Mucosa of descending colon (tissue), 3 donors: ENCODE measurements at regions of chr15 and their contacts with region 1.

Region 1: GRCh38 chr15:89874926-89875564 is 18.7 kb downstream of the AP3S2 start:
- DNase-seq: peak; percentile 86 to 95 (median 91)
- ATAC-seq: peak; percentile 96
- H3K4me3 ChIP-seq: no peak overlapping the region
- H3K4me1 ChIP-seq: no peaks in the 10 kb centered on the region
- CTCF ChIP-seq: peak; percentile 90

Region 2: DNA sequence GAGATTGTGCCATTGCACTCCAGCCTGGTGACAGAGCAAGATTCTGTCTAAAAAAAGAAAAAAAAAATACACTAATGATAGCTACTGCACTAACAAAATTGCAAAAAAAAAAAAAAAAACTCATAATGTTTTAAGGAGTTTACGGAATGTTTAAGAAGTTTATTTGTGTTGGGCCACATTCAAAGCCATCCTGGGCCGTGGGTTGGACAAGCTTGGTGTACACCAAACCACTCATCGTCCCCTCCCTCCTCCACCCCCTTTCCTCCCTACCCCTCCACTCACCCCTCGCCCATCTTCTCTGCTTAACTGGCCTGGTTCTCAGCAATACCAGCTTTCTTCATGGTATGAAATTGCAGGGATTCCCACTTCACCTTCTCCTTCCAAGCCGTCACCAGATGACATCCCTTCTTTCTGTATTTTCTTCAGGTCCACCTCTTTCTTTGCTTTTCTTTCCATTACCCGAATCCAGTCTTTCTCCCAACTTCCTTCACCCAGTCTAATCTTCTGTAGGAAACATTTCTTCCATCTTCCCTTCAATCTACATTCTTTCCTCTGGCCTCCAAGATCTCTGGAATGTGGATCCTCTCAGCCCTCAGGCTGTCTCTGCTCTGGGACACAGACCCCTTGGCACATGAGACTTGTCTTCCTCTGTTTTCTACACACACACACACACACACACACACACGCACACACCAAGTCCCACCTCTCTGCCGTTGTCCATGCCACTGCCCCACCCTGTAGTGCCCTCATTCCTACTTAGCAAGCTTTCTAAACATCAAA is 120.5 kb before region 1 on chr15:
- intact Hi-C with region 1: loop called in 1 of 2 experiments (anchors 5 kb)
- DNase-seq: no peak
- ATAC-seq: no peak
- H3K4me3 ChIP-seq: no peak overlapping the region
- H3K4me1 ChIP-seq: peaks cover 8% of the 10 kb centered on the region
- CTCF ChIP-seq: no peak

Region 3: GRCh38 chr15:89760303-89761008 is 114.6 kb before region 1 on chr15:
- intact Hi-C with region 1: loop called (anchors 5 kb)
- DNase-seq: peak; percentile 87 to 94 (median 93)
- ATAC-seq: peak; percentile 93
- H3K4me3 ChIP-seq: no peak overlapping the region
- H3K4me1 ChIP-seq: peaks cover 24% of the 10 kb centered on the region
- CTCF ChIP-seq: peak; percentile 92

Region 4: DNA sequence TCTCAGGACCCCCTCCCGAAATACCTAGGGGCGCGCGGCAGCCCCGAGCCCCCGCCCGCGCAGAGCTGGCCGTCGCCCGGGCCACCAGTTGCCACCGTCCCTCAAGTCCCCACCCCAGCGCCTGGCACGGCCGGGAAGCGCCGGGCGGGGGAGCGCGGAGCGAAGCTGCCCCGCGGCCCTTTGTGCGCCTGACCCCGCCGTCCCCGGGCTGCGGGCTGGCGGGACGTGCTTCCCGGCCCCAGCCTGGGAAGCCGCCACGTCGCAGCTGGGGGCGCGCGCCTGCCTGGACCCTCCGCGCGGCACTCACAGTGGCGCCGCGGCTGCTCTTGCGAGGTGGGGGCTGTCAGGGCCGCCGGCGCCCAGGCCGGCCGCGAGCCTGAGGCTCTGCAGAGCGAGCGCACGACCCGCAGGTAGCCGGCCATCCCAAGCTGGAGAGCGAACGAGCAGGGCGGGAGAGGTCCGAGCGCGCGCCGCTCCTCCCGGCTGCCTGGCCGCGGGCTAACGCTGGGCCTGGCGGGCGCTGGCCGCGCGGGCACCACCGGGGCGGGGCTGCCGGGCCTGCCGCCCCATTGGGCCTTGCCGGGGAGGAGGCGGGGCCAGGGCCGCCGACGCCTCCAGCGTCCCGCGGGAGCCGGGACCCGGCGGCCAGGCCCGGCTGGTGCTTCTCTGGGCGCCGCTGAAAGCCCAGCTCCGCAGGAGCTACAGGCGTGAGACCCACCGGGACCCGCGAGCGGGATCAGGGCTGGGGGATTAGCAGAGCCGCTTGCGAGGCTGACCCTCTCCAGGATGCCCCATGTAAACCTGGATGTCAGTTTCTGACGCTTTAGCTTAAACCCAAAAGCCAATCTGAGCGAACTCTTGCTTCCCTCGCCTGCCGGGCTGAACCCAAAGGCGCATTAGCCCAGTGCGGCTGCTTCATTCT is 227.2 kb after region 1 on chr15 and contains the start of gene IDH2:
- intact Hi-C with region 1: no loop called
- DNase-seq: peak; percentile 79 to 91 (median 89)
- ATAC-seq: peak; percentile 90
- H3K4me3 ChIP-seq: peak within 1 kb of the TSS; percentile 84
- H3K4me1 ChIP-seq: peaks cover 29% of the 10 kb centered on the region
- CTCF ChIP-seq: no peak
- total RNA-seq, gene IDH2: 84.8 to 262 (median 124) TPM